ENCODE measurements at regions of chr6 and their contacts with region 1.

Region 1: GRCh38 chr6:148947621-148948444 is 201.0 kb downstream of the UST start:
- DNase-seq: peak; percentile 64 to 87 (median 73)
- ATAC-seq: peak; percentile 81
- H3K4me3 ChIP-seq: no peak overlapping the region
- H3K4me3 Mint-ChIP-seq: no peak overlapping the region
- H3K27ac ChIP-seq: no peak overlapping the region
- H3K27ac Mint-ChIP-seq: no peak overlapping the region
- H3K4me1 ChIP-seq: peaks cover 2% of the 10 kb centered on the region
- H3K4me1 Mint-ChIP-seq: no peaks in the 10 kb centered on the region
- H3K27me3 ChIP-seq: no peaks in the 10 kb centered on the region
- H3K27me3 Mint-ChIP-seq: peaks cover 4% of the 10 kb centered on the region
- CTCF ChIP-seq: peak; percentile 94

Region 2: GRCh38 chr6:148559848-148560433 is 387.9 kb before region 1 on chr6:
- CTCF ChIA-PET with region 1: no interaction called
- POLR2A ChIA-PET with region 1: no interaction called
- intact Hi-C with region 1: loop called (anchors 1 to 5 kb)
- DNase-seq: peak; percentile 40 to 81 (median 56)
- ATAC-seq: peak; percentile 86
- H3K4me3 ChIP-seq: peak overlapping the region; percentile 27
- H3K4me3 Mint-ChIP-seq: no peak overlapping the region
- H3K27ac ChIP-seq: no peak overlapping the region
- H3K27ac Mint-ChIP-seq: no peak overlapping the region
- H3K4me1 ChIP-seq: peaks cover 9% of the 10 kb centered on the region
- H3K4me1 Mint-ChIP-seq: peaks cover 8% of the 10 kb centered on the region
- H3K27me3 ChIP-seq: no peaks in the 10 kb centered on the region
- H3K27me3 Mint-ChIP-seq: peaks cover 26% of the 10 kb centered on the region
- CTCF ChIP-seq: peak; percentile 91

Region 3: DNA sequence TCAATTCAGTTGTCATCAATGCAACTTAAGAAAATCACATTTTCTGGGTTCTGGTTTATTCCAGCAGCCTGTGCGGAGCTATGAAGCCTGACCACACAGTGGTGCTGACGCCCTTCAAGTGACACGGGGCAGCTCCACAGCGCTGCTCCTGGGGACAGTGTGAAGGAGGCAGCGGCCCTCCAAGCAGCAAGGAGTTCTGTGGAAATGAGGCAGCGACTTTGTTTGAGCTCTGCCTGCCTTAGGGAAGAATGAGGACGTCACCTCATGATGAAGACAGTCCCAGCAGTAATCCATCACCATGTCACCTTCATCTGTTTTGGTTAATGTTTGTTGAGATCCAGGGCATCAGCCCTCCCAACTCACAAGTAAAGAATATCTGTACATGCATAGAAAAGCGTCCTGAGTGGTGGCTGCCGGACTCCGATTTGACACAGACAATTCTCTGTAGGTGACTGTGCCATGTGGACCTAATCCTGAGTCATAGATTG is 369.5 kb before region 1 on chr6:
- CTCF ChIA-PET with region 1: interaction called, 3 read pairs
- POLR2A ChIA-PET with region 1: no interaction called
- intact Hi-C with region 1: loop called (anchors 2 to 5 kb)
- DNase-seq: peak in 9 of 14 experiments; percentile 9 to 73 (median 15)
- ATAC-seq: peak; percentile 93
- H3K4me3 ChIP-seq: no peak overlapping the region
- H3K4me3 Mint-ChIP-seq: no peak overlapping the region
- H3K27ac ChIP-seq: no peak overlapping the region
- H3K27ac Mint-ChIP-seq: no peak overlapping the region
- H3K4me1 ChIP-seq: no peaks in the 10 kb centered on the region
- H3K4me1 Mint-ChIP-seq: no peaks in the 10 kb centered on the region
- H3K27me3 ChIP-seq: peaks cover 0 to 7% of the 10 kb centered on the region in 2 experiments
- H3K27me3 Mint-ChIP-seq: peaks cover 44% of the 10 kb centered on the region
- CTCF ChIP-seq: peak; percentile 29

Region 4: GRCh38 chr6:149028767-149029405 is 81.1 kb after region 1 on chr6:
- CTCF ChIA-PET with region 1: no interaction called
- POLR2A ChIA-PET with region 1: no interaction called
- intact Hi-C with region 1: no loop called
- DNase-seq: peak; percentile 23 to 91 (median 58)
- ATAC-seq: peak; percentile 73
- H3K4me3 ChIP-seq: no peak overlapping the region
- H3K4me3 Mint-ChIP-seq: no peak overlapping the region
- H3K27ac ChIP-seq: no peak overlapping the region
- H3K27ac Mint-ChIP-seq: peak overlapping the region; percentile 1
- H3K4me1 ChIP-seq: peaks cover 21% of the 10 kb centered on the region
- H3K4me1 Mint-ChIP-seq: peaks cover 45% of the 10 kb centered on the region
- H3K27me3 ChIP-seq: no peaks in the 10 kb centered on the region
- H3K27me3 Mint-ChIP-seq: no peaks in the 10 kb centered on the region
- CTCF ChIP-seq: peak; percentile 86

Measured in CD4-positive, alpha-beta T cell (primary cell).